ENCODE measurements at regions of chr12 and their contacts with region 1.

Region 1: DNA sequence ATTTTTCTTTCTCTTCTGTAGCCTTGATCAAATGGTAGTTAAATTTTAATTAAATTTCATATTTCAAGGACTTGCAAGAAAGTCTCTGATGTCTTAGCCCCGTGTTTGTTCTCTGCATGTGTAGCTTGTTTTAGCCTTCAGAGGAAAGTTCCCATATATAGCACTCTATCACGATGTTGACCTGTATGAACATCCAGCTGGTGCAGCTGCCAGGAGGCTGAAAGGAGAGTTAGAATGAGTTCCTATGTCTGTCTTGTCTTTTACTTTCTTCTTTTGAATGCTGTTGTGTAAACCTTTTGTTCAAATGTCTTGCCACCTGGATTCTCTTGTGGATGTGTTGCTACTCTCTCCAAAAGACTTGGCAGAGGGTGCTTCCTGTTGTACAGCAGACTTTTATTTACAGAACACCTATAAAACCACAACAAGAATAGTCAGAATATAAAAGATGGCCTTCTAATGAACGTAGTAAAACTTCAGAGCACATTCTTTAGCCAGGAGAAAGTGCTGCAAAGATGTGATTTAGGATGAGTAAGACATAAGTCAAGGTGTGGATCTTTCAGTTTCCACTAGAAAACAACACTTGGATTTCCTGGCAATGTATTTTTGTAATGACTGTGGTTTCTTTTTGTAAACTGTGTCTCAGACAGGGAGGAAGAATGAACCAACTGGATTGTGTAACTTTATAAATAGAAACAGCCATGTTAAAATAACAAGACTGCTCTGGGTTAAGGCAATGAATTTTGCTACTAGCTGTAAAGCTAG is 17.2 kb downstream of the NAV3 start:
- DNase-seq: peak; percentile 19 to 69
- H3K4me3 ChIP-seq: no peak overlapping the region
- H3K27ac ChIP-seq: peak overlapping the region; percentile 37
- H3K4me1 ChIP-seq: peaks cover 36% of the 10 kb centered on the region
- H3K27me3 ChIP-seq: no peaks in the 10 kb centered on the region
- CTCF ChIP-seq: no peak

Region 2: DNA sequence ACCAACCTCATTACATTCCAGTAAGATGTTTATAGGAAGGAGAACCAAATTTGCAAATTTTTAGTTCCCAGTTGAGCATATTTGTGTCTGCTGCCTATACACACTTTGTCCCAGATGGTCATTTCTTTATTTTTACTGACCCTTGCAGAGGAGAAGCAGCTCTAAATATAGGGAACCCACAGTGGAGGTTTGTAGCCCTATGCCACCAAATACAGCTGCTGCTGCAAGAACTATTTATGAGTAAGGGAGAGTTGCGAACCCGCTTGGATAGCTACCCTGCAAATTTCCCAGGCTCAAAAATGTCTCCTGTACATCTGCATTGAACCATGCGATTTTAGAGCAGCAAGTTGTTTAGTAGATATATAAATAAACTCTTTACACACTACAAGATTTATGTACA is 31.1 kb after region 1 on chr12:
- CTCF ChIA-PET with region 1: no interaction called
- POLR2A ChIA-PET with region 1: no interaction called
- intact Hi-C with region 1: no loop called
- DNase-seq: no peak
- H3K4me3 ChIP-seq: no peak overlapping the region
- H3K27ac ChIP-seq: no peak overlapping the region
- H3K4me1 ChIP-seq: no peaks in the 10 kb centered on the region
- H3K27me3 ChIP-seq: no peaks in the 10 kb centered on the region
- CTCF ChIP-seq: no peak

Region 3: GRCh38 chr12:77893918-77894317 is 46.1 kb after region 1 on chr12:
- CTCF ChIA-PET with region 1: no interaction called
- POLR2A ChIA-PET with region 1: no interaction called
- intact Hi-C with region 1: loop called (anchors 2 kb)
- DNase-seq: peak in 1 of 2 experiments; percentile 36
- H3K4me3 ChIP-seq: no peak overlapping the region
- H3K27ac ChIP-seq: no peak overlapping the region
- H3K4me1 ChIP-seq: peaks cover 10% of the 10 kb centered on the region
- H3K27me3 ChIP-seq: no peaks in the 10 kb centered on the region
- CTCF ChIP-seq: no peak

Region 4: GRCh38 chr12:78328524-78328923 is 480.7 kb after region 1 on chr12:
- CTCF ChIA-PET with region 1: no interaction called
- POLR2A ChIA-PET with region 1: no interaction called
- intact Hi-C with region 1: no loop called
- DNase-seq: no peak
- H3K4me3 ChIP-seq: no peak overlapping the region
- H3K27ac ChIP-seq: no peak overlapping the region
- H3K4me1 ChIP-seq: no peaks in the 10 kb centered on the region
- H3K27me3 ChIP-seq: no peaks in the 10 kb centered on the region
- CTCF ChIP-seq: no peak

Measured in PC-9 (cell line).